ENCODE measurements at regions of chr5 and their contacts with region 1.

Region 1: DNA sequence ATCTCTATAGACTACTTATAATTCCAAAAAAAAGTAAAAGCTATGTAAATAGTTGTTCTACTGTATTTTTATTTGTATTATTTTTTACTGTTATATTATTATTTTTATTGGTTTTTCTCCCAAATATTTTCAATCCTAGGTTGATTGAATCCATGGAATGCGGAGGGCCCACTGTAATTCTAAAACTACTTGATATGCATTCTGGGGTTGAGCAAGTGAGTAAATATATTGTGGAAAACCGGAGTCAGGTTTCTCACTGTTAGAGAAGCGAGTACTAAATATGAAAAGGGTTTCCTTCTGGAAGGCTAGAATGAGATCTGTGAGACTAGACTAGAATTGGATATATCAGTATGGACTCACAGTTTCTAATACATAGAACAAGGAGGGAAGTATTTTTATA is 66.5 kb downstream of the FBXW11 start:
- DNase-seq: no peak
- H3K4me3 ChIP-seq: no peak overlapping the region
- CTCF ChIP-seq: no peak

Region 2: GRCh38 chr5:171984748-171985419 is 44.9 kb after region 1 on chr5:
- in situ Hi-C with region 1: no loop called
- DNase-seq: peak; percentile 42
- H3K4me3 ChIP-seq: no peak overlapping the region
- CTCF ChIP-seq: no peak

Region 3: DNA sequence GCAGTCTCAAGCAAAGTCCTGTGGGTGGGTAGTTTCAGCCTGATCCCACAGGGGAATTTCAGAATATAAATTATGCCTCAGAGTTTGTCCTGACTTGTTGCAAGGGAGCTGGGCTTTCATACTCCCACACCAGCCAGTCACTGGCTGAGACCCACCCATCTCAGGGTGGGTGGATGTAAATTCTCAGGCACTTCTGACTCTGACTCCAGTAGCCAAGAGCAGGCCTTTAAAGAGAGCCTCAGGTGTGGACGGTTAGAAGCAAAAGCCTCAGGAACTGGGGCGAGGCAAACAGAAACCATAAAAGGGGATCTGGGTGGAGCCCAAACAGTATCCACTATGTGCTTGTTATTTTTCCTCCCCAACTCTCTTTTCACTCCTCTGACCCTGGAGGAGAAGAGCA is 95.1 kb after region 1 on chr5:
- in situ Hi-C with region 1: loop called (anchors 5 kb)
- DNase-seq: no peak
- H3K4me3 ChIP-seq: no peak overlapping the region
- CTCF ChIP-seq: no peak